ENCODE measurements at regions of chr3 and their contacts with region 1.

Region 1: GRCh38 chr3:197002701-197003454 is 26.7 kb downstream of the MELTF start:
- DNase-seq: peak; percentile 88
- H3K4me3 ChIP-seq: peak overlapping the region; percentile 60
- H3K27ac ChIP-seq: peak overlapping the region; percentile 82
- H3K4me1 ChIP-seq: peaks cover 22% of the 10 kb centered on the region
- H3K27me3 ChIP-seq: no peaks in the 10 kb centered on the region
- CTCF ChIP-seq: peak; percentile 52; the same call in 1 of the 2 replicates

Region 2: DNA sequence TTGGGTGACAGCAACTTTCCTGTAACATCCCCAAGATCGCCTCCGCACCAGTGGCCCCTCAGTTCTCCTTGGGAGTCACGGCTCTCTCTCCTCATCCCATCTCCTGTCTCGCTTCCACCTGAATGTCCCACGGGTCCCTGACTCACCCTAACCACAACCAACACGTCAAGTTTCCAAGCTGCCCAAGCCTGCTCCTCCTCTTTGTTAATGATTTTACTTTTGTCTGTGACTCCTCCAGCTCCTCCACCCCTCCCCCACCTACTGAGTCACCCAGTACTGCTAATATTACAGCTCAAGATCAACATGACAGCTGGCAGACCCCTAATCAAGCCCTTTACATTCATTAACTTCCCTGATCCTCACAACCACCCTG is 513.6 kb after region 1 on chr3:
- CTCF ChIA-PET with region 1: no interaction called
- POLR2A ChIA-PET with region 1: no interaction called
- intact Hi-C with region 1: loop called (anchors 10 kb)
- DNase-seq: no peak
- H3K4me3 ChIP-seq: no peak overlapping the region
- H3K27ac ChIP-seq: peak overlapping the region; percentile 60
- H3K4me1 ChIP-seq: peaks cover 44% of the 10 kb centered on the region
- H3K27me3 ChIP-seq: no peaks in the 10 kb centered on the region
- CTCF ChIP-seq: no peak

Measured in A673 (cell line).